ENCODE measurements at regions of chr10 and their contacts with region 1.

Region 1: DNA sequence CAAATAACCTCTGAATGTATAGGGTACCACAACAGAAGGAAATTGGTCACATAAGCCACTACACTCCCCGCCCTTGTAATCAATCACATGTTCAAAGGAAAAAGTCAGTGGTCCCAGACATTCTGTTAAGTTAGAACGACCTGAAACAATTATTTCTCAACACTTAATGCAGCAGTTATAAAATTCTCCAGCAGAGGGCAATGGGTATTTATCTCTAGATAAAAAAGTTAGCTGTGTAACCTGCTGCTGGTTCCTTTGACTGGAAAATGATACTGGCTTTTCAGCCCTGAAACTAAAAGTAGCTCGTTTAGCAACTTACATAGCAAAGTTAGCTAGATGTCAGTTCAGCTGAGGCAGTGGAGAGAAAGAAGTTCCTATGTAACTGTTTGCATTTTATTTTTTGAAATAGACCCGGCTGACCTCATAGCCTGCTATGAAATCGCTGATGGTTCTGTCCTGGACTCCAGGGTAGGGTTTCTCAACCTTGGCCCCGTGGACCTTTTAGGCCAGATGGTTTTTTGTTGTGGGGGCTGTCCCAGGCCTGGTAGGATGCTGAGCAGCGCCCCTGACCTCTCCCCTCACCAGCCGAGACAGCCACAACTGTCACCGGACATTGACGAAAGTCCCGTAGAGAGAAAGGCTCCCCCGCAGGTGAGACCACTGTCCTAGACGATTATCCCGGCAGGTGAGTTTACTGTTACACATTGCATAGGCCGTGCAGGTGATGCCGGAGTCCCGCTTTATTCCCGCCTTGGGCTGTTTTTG is 40.2 kb upstream of the PROSER2 start:
- DNase-seq: no peak
- ATAC-seq: peak; percentile 76
- H3K4me3 Mint-ChIP-seq: no peak overlapping the region
- H3K27ac Mint-ChIP-seq: no peak overlapping the region
- H3K4me1 Mint-ChIP-seq: peaks cover 2% of the 10 kb centered on the region
- H3K27me3 Mint-ChIP-seq: peaks cover 2% of the 10 kb centered on the region

Region 2: GRCh38 chr10:11318826-11319599 is 464.0 kb before region 1 on chr10:
- CTCF ChIA-PET with region 1: no interaction called
- POLR2A ChIA-PET with region 1: no interaction called
- intact Hi-C with region 1: no loop called
- DNase-seq: no peak
- ATAC-seq: no peak
- H3K4me3 Mint-ChIP-seq: no peak overlapping the region
- H3K27ac Mint-ChIP-seq: peak overlapping the region; percentile 92
- H3K4me1 Mint-ChIP-seq: peaks cover 84% of the 10 kb centered on the region
- H3K27me3 Mint-ChIP-seq: no peaks in the 10 kb centered on the region

Region 3: GRCh38 chr10:11823122-11823988 is 40.4 kb after region 1 on chr10 and contains the start of gene PROSER2:
- CTCF ChIA-PET with region 1: interaction called, 14 read pairs
- POLR2A ChIA-PET with region 1: no interaction called
- intact Hi-C with region 1: no loop called
- DNase-seq: peak; percentile 60
- ATAC-seq: peak; percentile 76
- H3K4me3 Mint-ChIP-seq: peak within 1 kb of the TSS; percentile 69
- H3K27ac Mint-ChIP-seq: peak within 1 kb of the TSS; percentile 70
- H3K4me1 Mint-ChIP-seq: peaks cover 7% of the 10 kb centered on the region
- H3K27me3 Mint-ChIP-seq: peaks cover 34% of the 10 kb centered on the region
- total RNA-seq, gene PROSER2: 0.78 to 0.88 TPM

Region 4: DNA sequence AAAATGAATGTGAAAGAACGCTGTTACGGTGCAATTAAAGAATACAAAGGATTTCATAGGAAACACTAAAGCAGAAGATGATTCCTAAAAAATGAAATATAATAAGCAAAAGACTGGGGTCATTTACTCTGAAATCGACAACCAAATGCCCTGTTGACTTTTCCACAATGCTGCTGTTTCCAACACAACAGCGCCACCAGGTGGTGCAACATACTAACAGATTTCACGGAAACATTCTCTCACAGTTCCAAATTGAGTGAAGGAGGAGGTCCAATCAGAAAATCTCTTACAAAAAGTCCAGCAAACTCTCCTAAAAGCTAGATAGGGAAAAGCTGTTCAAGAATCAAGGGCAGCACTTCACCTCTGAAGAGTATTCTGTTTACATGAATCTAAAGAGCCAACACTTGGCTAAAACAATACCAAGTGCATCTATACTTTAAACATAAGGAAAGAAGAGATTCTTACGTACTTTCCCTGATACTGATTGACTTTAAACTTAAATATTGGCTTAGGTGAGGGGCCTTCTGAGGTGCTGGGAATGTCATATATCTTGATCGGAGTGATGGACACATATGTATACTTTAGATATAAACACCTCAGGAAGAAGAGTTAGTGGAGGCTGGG is 203.7 kb after region 1 on chr10:
- CTCF ChIA-PET with region 1: interaction called, 26 read pairs
- POLR2A ChIA-PET with region 1: no interaction called
- intact Hi-C with region 1: loop called (anchors 1 to 2 kb)
- DNase-seq: peak; percentile 88
- ATAC-seq: peak; percentile 66
- H3K4me3 Mint-ChIP-seq: no peak overlapping the region
- H3K27ac Mint-ChIP-seq: peak overlapping the region; percentile 69
- H3K4me1 Mint-ChIP-seq: peaks cover 7% of the 10 kb centered on the region
- H3K27me3 Mint-ChIP-seq: no peaks in the 10 kb centered on the region

Measured in activated CD4-positive, alpha-beta T cell treated with anti-CD3 and anti-CD28 coated beads for 36 hours (primary cell).